ENCODE measurements at regions of chr6 and their contacts with region 1.

Region 1: GRCh38 chr6:87407901-87408720 is at the start of gene CFAP206:
- DNase-seq: peak; percentile 86
- H3K4me3 Mint-ChIP-seq: peak within 1 kb of the TSS; percentile 82
- H3K27ac Mint-ChIP-seq: peak within 1 kb of the TSS; percentile 58
- H3K4me1 Mint-ChIP-seq: peaks cover 9% of the 10 kb centered on the region
- H3K27me3 Mint-ChIP-seq: peaks cover 31% of the 10 kb centered on the region
- total RNA-seq, gene CFAP206: not detected

Region 2: GRCh38 chr6:87291883-87292282 is 116.2 kb before region 1 on chr6:
- CTCF ChIA-PET with region 1: no interaction called
- POLR2A ChIA-PET with region 1: no interaction called
- DNase-seq: no peak
- H3K4me3 Mint-ChIP-seq: no peak overlapping the region
- H3K27ac Mint-ChIP-seq: no peak overlapping the region
- H3K4me1 Mint-ChIP-seq: no peaks in the 10 kb centered on the region
- H3K27me3 Mint-ChIP-seq: peaks cover 24% of the 10 kb centered on the region

Region 3: GRCh38 chr6:88914895-88915598 is 1506.9 kb after region 1 on chr6:
- CTCF ChIA-PET with region 1: no interaction called
- POLR2A ChIA-PET with region 1: interaction called, 12 read pairs
- DNase-seq: no peak
- H3K4me3 Mint-ChIP-seq: no peak overlapping the region
- H3K27ac Mint-ChIP-seq: no peak overlapping the region
- H3K4me1 Mint-ChIP-seq: peaks cover 23% of the 10 kb centered on the region
- H3K27me3 Mint-ChIP-seq: no peaks in the 10 kb centered on the region